PC-9 (cell line): ENCODE measurements at regions of chr20 and their contacts with region 1.

Region 1: GRCh38 chr20:49219089-49219923 is at the start of gene DDX27:
- DNase-seq: peak; percentile 96 to 98
- H3K4me3 ChIP-seq: peak within 1 kb of the TSS; percentile 71
- H3K27ac ChIP-seq: peak within 1 kb of the TSS; percentile 53
- H3K4me1 ChIP-seq: peaks cover 12% of the 10 kb centered on the region
- H3K27me3 ChIP-seq: no peaks in the 10 kb centered on the region
- CTCF ChIP-seq: no peak
- total RNA-seq, gene DDX27: 50.6 and 64.4 TPM in 2 replicates

Region 2: GRCh38 chr20:49186535-49187329 is 32.6 kb before region 1 on chr20:
- CTCF ChIA-PET with region 1: interaction called, 16 read pairs
- POLR2A ChIA-PET with region 1: interaction called, 3 read pairs
- intact Hi-C with region 1: loop called (anchors 1 kb)
- DNase-seq: peak; percentile 49 to 52
- H3K4me3 ChIP-seq: peak overlapping the region; percentile 99
- H3K27ac ChIP-seq: peak overlapping the region; percentile 16
- H3K4me1 ChIP-seq: peaks cover 7% of the 10 kb centered on the region
- H3K27me3 ChIP-seq: no peaks in the 10 kb centered on the region
- CTCF ChIP-seq: no peak